B cell (primary cell): ENCODE measurements at regions of chr7 and their contacts with region 1.

Region 1: DNA sequence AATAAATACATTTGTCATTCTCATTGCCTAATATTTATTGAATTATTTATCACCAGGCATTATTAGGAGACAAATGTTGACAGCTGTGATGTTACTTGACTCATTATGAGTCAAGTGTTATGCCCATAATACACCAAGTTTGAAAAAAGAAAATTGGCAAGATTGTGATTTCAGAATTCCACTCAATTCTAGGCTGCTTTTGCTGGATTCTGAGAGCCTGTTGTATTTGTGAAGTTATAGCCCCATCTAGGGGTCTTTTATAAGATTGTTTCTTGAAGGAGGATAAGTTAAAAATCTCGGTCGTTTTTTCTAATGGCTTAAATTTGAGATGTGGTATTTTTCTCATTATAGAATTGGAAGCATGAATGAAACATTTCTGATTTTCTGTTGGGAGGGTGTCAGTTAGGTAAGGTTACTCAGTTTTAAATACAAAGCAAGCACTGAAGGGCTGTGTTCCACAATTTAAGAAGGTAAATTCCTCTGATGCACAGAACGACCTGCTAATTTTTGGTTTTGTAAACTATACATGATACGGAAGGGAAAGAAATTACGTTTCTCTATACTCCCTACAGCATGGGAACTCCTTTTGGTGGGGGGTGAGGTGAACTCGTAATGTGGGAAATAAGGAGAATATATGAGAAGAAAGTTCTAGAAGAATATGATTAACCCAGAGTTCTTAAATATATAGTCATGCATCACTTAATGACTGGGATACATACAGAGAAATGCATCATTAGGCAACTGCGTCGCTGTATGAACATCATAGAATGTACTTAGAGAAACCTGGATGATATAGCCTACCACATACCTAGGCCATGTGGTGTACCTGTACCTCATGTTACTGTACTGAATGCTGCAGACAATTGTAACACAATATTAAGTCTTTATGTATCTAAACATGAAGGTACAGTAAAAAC is 2.6 kb downstream of the STK31 start:
- DNase-seq: peak; percentile 66
- ATAC-seq: peak; percentile 39
- H3K4me3 ChIP-seq: no peak overlapping the region
- H3K4me3 Mint-ChIP-seq: no peak overlapping the region
- H3K27ac ChIP-seq: no peak overlapping the region
- H3K27ac Mint-ChIP-seq: no peak overlapping the region
- H3K4me1 ChIP-seq: no peaks in the 10 kb centered on the region
- H3K4me1 Mint-ChIP-seq: no peaks in the 10 kb centered on the region
- H3K27me3 ChIP-seq: no peaks in the 10 kb centered on the region
- H3K27me3 Mint-ChIP-seq: no peaks in the 10 kb centered on the region
- CTCF ChIP-seq: peak; percentile 85

Region 2: DNA sequence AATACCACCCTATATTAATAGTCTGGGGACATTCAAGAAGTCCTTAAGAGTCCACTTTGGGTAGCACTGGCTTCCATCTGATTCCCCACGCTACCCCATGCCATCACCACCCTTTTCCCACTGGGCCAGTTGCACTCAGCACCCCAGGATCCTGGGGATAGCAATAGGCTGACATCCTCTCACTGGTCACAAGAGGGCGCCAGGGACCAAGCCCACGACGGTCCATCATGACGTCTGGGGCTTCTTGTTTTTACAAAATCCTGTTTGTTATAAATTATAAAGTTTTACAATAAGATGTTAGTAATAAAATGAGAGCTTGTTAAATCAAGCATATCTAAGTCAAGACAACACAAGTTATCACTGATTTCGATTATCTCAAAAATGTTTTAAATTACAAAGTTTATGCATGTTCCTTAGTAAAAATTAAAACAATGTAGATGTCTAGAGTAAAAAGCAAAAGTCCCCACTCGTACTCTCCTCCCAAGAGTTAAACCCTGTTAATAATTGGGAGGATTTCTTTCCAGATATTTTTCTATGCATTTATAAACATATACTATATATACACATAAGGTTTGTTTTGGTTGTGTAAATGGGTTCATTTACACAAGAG is 450.7 kb before region 1 on chr7:
- CTCF ChIA-PET with region 1: interaction called, 4 read pairs
- POLR2A ChIA-PET with region 1: no interaction called
- intact Hi-C with region 1: loop called (anchors 1 kb)
- DNase-seq: peak; percentile 64
- ATAC-seq: peak; percentile 76
- H3K4me3 ChIP-seq: no peak overlapping the region
- H3K4me3 Mint-ChIP-seq: no peak overlapping the region
- H3K27ac ChIP-seq: no peak overlapping the region
- H3K27ac Mint-ChIP-seq: no peak overlapping the region
- H3K4me1 ChIP-seq: peaks cover 0 to 2% of the 10 kb centered on the region in 2 donors
- H3K4me1 Mint-ChIP-seq: no peaks in the 10 kb centered on the region
- H3K27me3 ChIP-seq: peaks cover 0 to 3% (median 0%) of the 10 kb centered on the region in 4 experiments
- H3K27me3 Mint-ChIP-seq: peaks cover 11% of the 10 kb centered on the region
- CTCF ChIP-seq: peak; percentile 85

Region 3: DNA sequence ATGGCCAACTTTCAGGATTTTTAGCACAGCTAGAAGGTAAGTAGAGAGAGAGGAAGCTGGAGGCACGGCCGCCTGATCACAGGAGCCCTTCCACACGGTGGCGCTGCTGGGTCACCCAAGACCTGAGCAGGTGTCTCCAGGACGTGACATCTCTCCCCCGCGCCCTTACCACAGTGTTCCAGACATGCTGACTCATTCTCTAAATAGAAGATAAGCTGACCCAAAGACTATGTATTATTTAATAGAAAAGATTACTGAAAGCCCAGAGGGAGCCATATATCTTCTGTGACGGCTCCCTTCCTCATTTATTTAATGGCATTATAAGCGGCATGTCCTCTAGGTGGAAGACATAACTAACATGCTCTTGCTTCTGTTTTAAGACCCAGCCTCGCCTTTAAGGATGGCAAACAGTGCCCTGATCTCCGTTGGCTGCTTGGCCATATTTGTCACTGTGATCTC is 439.5 kb before region 1 on chr7:
- CTCF ChIA-PET with region 1: interaction called, 10 read pairs
- POLR2A ChIA-PET with region 1: no interaction called
- intact Hi-C with region 1: loop called (anchors 1 kb)
- DNase-seq: peak; percentile 88
- ATAC-seq: peak; percentile 96
- H3K4me3 ChIP-seq: peak overlapping the region in 2 of 5 experiments; percentile 9 to 27
- H3K4me3 Mint-ChIP-seq: peak overlapping the region; percentile 72
- H3K27ac ChIP-seq: no peak overlapping the region
- H3K27ac Mint-ChIP-seq: peak overlapping the region; percentile 39
- H3K4me1 ChIP-seq: peaks cover 3 to 9% of the 10 kb centered on the region in 2 donors
- H3K4me1 Mint-ChIP-seq: peaks cover 4% of the 10 kb centered on the region
- H3K27me3 ChIP-seq: peaks cover 0 to 6% (median 0%) of the 10 kb centered on the region in 4 experiments
- H3K27me3 Mint-ChIP-seq: peaks cover 9% of the 10 kb centered on the region
- CTCF ChIP-seq: peak; percentile 90

Region 4: GRCh38 chr7:23546897-23547572 is 165.6 kb before region 1 on chr7:
- CTCF ChIA-PET with region 1: interaction called, 22 read pairs
- POLR2A ChIA-PET with region 1: no interaction called
- intact Hi-C with region 1: loop called (anchors 1 kb)
- DNase-seq: peak; percentile 90
- ATAC-seq: peak; percentile 91
- H3K4me3 ChIP-seq: peak overlapping the region in 1 of 5 experiments; percentile 18
- H3K4me3 Mint-ChIP-seq: no peak overlapping the region
- H3K27ac ChIP-seq: no peak overlapping the region
- H3K27ac Mint-ChIP-seq: no peak overlapping the region
- H3K4me1 ChIP-seq: peaks cover 8 to 13% of the 10 kb centered on the region in 2 donors
- H3K4me1 Mint-ChIP-seq: peaks cover 15% of the 10 kb centered on the region
- H3K27me3 ChIP-seq: no peaks in the 10 kb centered on the region
- H3K27me3 Mint-ChIP-seq: no peaks in the 10 kb centered on the region
- CTCF ChIP-seq: peak; percentile 98

Region 5: DNA sequence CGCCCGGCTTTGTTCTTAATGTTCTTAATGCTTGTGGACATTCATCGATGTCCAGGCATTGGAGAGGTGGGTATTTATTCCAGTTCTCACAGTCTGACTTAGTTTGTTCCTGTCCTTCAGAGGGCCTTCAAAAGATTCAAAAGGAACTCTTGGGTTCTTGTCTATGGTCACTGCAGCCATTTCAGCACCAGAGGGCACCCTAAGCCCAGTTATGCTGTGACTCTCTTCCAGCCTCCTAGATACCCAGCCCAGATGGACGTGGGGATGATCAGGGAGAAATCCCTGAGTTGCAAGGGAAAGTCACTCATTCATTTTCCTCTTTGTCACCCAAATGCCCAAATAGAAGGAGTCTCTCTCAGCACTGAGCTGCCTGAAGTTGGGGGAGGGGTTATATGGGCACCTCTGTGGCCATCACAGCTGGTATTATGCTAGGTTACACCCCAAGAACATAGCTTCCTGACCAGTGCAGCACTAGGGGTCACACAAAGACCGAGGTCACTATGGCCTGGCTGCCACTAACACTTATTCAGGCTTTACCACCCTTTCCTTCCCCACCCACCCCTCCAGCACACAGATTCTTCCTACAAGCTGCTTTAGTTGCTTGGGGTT is 141.9 kb before region 1 on chr7:
- CTCF ChIA-PET with region 1: interaction called, 119 read pairs
- POLR2A ChIA-PET with region 1: no interaction called
- intact Hi-C with region 1: loop called (anchors 1 kb)
- DNase-seq: peak; percentile 77
- ATAC-seq: peak; percentile 91
- H3K4me3 ChIP-seq: no peak overlapping the region
- H3K4me3 Mint-ChIP-seq: peak overlapping the region; percentile 57
- H3K27ac ChIP-seq: no peak overlapping the region
- H3K27ac Mint-ChIP-seq: no peak overlapping the region
- H3K4me1 ChIP-seq: no peaks in the 10 kb centered on the region
- H3K4me1 Mint-ChIP-seq: peaks cover 3% of the 10 kb centered on the region
- H3K27me3 ChIP-seq: peaks cover 0 to 4% (median 0%) of the 10 kb centered on the region in 4 experiments
- H3K27me3 Mint-ChIP-seq: peaks cover 10% of the 10 kb centered on the region
- CTCF ChIP-seq: peak; percentile 84

Region 6: DNA sequence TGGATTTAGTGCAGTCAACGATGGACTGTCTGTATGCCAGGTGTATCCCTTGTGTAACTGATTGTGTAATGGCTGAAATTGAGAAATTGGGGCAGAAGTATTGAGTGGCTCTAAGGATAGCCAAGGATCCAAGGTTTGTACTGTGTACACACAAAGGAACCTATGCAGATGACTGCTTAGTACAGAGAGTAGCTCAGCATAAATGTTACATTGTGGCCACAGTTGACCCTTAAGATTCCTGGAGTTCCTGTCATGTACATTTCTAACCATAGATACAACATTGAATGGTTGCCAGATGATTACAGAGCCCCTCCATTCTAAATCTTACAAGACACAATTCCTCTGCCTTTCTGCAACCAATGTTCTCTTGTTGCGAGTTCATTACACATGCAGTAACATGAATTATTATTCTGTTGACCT is 90.1 kb before region 1 on chr7:
- CTCF ChIA-PET with region 1: no interaction called
- POLR2A ChIA-PET with region 1: no interaction called
- intact Hi-C with region 1: no loop called
- DNase-seq: no peak
- ATAC-seq: no peak
- H3K4me3 ChIP-seq: no peak overlapping the region
- H3K4me3 Mint-ChIP-seq: no peak overlapping the region
- H3K27ac ChIP-seq: no peak overlapping the region
- H3K27ac Mint-ChIP-seq: no peak overlapping the region
- H3K4me1 ChIP-seq: no peaks in the 10 kb centered on the region
- H3K4me1 Mint-ChIP-seq: no peaks in the 10 kb centered on the region
- H3K27me3 ChIP-seq: no peaks in the 10 kb centered on the region
- H3K27me3 Mint-ChIP-seq: no peaks in the 10 kb centered on the region
- CTCF ChIP-seq: no peak

Region 7: GRCh38 chr7:23662124-23662983 is 50.3 kb before region 1 on chr7:
- CTCF ChIA-PET with region 1: no interaction called
- POLR2A ChIA-PET with region 1: no interaction called
- intact Hi-C with region 1: no loop called
- DNase-seq: no peak
- ATAC-seq: no peak
- H3K4me3 ChIP-seq: no peak overlapping the region
- H3K4me3 Mint-ChIP-seq: no peak overlapping the region
- H3K27ac ChIP-seq: no peak overlapping the region
- H3K27ac Mint-ChIP-seq: no peak overlapping the region
- H3K4me1 ChIP-seq: no peaks in the 10 kb centered on the region
- H3K4me1 Mint-ChIP-seq: no peaks in the 10 kb centered on the region
- H3K27me3 ChIP-seq: no peaks in the 10 kb centered on the region
- H3K27me3 Mint-ChIP-seq: no peaks in the 10 kb centered on the region
- CTCF ChIP-seq: no peak

Region 8: GRCh38 chr7:23696916-23697441 is 15.6 kb before region 1 on chr7:
- CTCF ChIA-PET with region 1: interaction called, 34 read pairs
- POLR2A ChIA-PET with region 1: no interaction called
- intact Hi-C with region 1: no loop called
- DNase-seq: peak; percentile 67
- ATAC-seq: peak; percentile 45
- H3K4me3 ChIP-seq: no peak overlapping the region
- H3K4me3 Mint-ChIP-seq: no peak overlapping the region
- H3K27ac ChIP-seq: no peak overlapping the region
- H3K27ac Mint-ChIP-seq: no peak overlapping the region
- H3K4me1 ChIP-seq: no peaks in the 10 kb centered on the region
- H3K4me1 Mint-ChIP-seq: peaks cover 2% of the 10 kb centered on the region
- H3K27me3 ChIP-seq: no peaks in the 10 kb centered on the region
- H3K27me3 Mint-ChIP-seq: no peaks in the 10 kb centered on the region
- CTCF ChIP-seq: peak; percentile 85